Activated naive CD4-positive, alpha-beta T cell treated with anti-CD3 and anti-CD28 coated beads for 36 hours (primary cell): ENCODE measurements at regions of chr6 and their contacts with region 1.

Region 1: GRCh38 chr6:4775584-4776494 is at the start of gene CDYL:
- DNase-seq: peak; percentile 85
- H3K4me3 Mint-ChIP-seq: peak within 1 kb of the TSS; percentile 85
- H3K27ac Mint-ChIP-seq: peak within 1 kb of the TSS; percentile 81
- H3K4me1 Mint-ChIP-seq: peaks cover 56% of the 10 kb centered on the region
- H3K27me3 Mint-ChIP-seq: peaks cover 12% of the 10 kb centered on the region
- total RNA-seq, gene CDYL: 23.8 to 24.3 TPM

Region 2: GRCh38 chr6:4018172-4018905 is 757.5 kb before region 1 on chr6:
- CTCF ChIA-PET with region 1: no interaction called
- intact Hi-C with region 1: loop called (anchors 2 kb)
- DNase-seq: peak; percentile 97
- H3K4me3 Mint-ChIP-seq: peak overlapping the region; percentile 82
- H3K27ac Mint-ChIP-seq: peak overlapping the region; percentile 92
- H3K4me1 Mint-ChIP-seq: peaks cover 57% of the 10 kb centered on the region
- H3K27me3 Mint-ChIP-seq: no peaks in the 10 kb centered on the region

Region 3: GRCh38 chr6:4637691-4638433 is 138.0 kb before region 1 on chr6:
- CTCF ChIA-PET with region 1: interaction called, 3 read pairs
- intact Hi-C with region 1: loop called (anchors 1 kb)
- DNase-seq: peak; percentile 67
- H3K4me3 Mint-ChIP-seq: no peak overlapping the region
- H3K27ac Mint-ChIP-seq: no peak overlapping the region
- H3K4me1 Mint-ChIP-seq: peaks cover 15% of the 10 kb centered on the region
- H3K27me3 Mint-ChIP-seq: peaks cover 29% of the 10 kb centered on the region

Region 4: GRCh38 chr6:4809999-4810918 is 34.4 kb after region 1 on chr6:
- CTCF ChIA-PET with region 1: no interaction called
- intact Hi-C with region 1: loop called (anchors 1 kb)
- DNase-seq: no peak
- H3K4me3 Mint-ChIP-seq: no peak overlapping the region
- H3K27ac Mint-ChIP-seq: peak overlapping the region; percentile 20
- H3K4me1 Mint-ChIP-seq: peaks cover 66% of the 10 kb centered on the region
- H3K27me3 Mint-ChIP-seq: no peaks in the 10 kb centered on the region

Region 5: DNA sequence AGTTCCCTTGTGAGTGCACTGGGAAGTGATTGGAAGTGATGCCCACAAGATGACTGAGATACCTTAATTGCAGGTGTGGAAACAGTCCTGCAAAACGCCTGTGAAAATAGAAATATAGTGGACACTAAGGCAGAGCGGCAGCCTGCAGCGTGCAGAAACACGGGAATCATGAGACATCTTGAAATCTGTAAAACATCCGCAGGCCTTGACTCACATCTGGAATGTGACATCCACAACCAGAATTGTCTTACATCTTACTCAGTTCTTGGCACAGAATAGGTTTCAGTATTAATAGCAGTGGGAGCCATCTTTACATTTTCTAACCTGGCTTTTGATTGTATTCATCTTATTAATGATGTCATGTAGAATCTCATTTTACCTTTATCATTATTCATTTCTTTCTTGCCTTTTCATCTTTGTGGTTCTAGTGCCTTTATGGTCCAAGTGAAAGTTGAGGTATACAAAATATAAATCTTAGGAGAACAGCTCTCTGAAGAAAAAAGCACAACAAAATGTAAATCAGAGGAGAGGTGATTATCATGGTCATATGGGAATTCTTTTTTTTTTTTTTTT is 45.0 kb after region 1 on chr6:
- CTCF ChIA-PET with region 1: no interaction called
- intact Hi-C with region 1: no loop called
- DNase-seq: peak; percentile 23
- H3K4me3 Mint-ChIP-seq: no peak overlapping the region
- H3K27ac Mint-ChIP-seq: no peak overlapping the region
- H3K4me1 Mint-ChIP-seq: peaks cover 32% of the 10 kb centered on the region
- H3K27me3 Mint-ChIP-seq: no peaks in the 10 kb centered on the region

Region 6: GRCh38 chr6:5003604-5004372 is 227.9 kb after region 1 on chr6 and contains the start of gene RPP40:
- CTCF ChIA-PET with region 1: no interaction called
- intact Hi-C with region 1: loop called (anchors 1 kb)
- DNase-seq: peak; percentile 98
- H3K4me3 Mint-ChIP-seq: peak within 1 kb of the TSS; percentile 90
- H3K27ac Mint-ChIP-seq: peak within 1 kb of the TSS; percentile 91
- H3K4me1 Mint-ChIP-seq: peaks cover 11% of the 10 kb centered on the region
- H3K27me3 Mint-ChIP-seq: no peaks in the 10 kb centered on the region
- total RNA-seq, gene RPP40: 8.2 to 9.8 TPM